GM12878 (cell line): ENCODE measurements at regions of chr4 and their contacts with region 1.

Region 1: GRCh38 chr4:140343303-140343702 is 30.1 kb upstream of the SCOC start:
- DNase-seq: no peak
- ATAC-seq: no peak
- H3K4me3 ChIP-seq: no peak overlapping the region
- H3K27ac ChIP-seq: no peak overlapping the region
- H3K4me1 ChIP-seq: no peaks in the 10 kb centered on the region
- H3K27me3 ChIP-seq: no peaks in the 10 kb centered on the region
- CTCF ChIP-seq: no peak
- EP300 ChIP-seq: no peak
- POLR2A ChIP-seq: no peak
- RAD21 ChIP-seq: no peak

Region 2: GRCh38 chr4:140296335-140297220 is 46.7 kb before region 1 on chr4:
- CTCF ChIA-PET with region 1: no interaction called
- POLR2A ChIA-PET with region 1: no interaction called
- RAD21 ChIA-PET with region 1: no interaction called
- SMC1A ChIA-PET with region 1: no interaction called
- in situ Hi-C with region 1: no loop called
- intact Hi-C with region 1: loop called (anchors 1 kb)
- DNase-seq: no peak
- ATAC-seq: no peak
- H3K4me3 ChIP-seq: no peak overlapping the region
- H3K27ac ChIP-seq: no peak overlapping the region
- H3K4me1 ChIP-seq: no peaks in the 10 kb centered on the region
- H3K27me3 ChIP-seq: no peaks in the 10 kb centered on the region; a peak in 1 of 4 replicates
- CTCF ChIP-seq: no peak
- EP300 ChIP-seq: no peak
- POLR2A ChIP-seq: no peak
- RAD21 ChIP-seq: no peak